PC-3 (cell line): ENCODE measurements at regions of chr10 and their contacts with region 1.

Region 1: GRCh38 chr10:86376852-86377796 is 10.5 kb upstream of the GRID1 start:
- DNase-seq: peak; percentile 69
- ATAC-seq: peak; percentile 99
- H3K4me3 ChIP-seq: peak overlapping the region; percentile 38; the same call in 1 of the 2 replicates
- H3K27ac ChIP-seq: no peak overlapping the region
- H3K4me1 ChIP-seq: no peaks in the 10 kb centered on the region
- H3K27me3 ChIP-seq: peaks cover 8% of the 10 kb centered on the region; the same call in 1 of the 2 replicates
- CTCF ChIP-seq: peak; percentile 84

Region 2: GRCh38 chr10:85995791-85996190 is 381.3 kb before region 1 on chr10:
- CTCF ChIA-PET with region 1: no interaction called
- POLR2A ChIA-PET with region 1: no interaction called
- intact Hi-C with region 1: loop called (anchors 5 kb)
- DNase-seq: peak; percentile 43
- ATAC-seq: peak; percentile 33; the same call in 1 of the 2 replicates
- H3K4me3 ChIP-seq: no peak overlapping the region
- H3K27ac ChIP-seq: no peak overlapping the region
- H3K4me1 ChIP-seq: no peaks in the 10 kb centered on the region
- H3K27me3 ChIP-seq: no peaks in the 10 kb centered on the region
- CTCF ChIP-seq: peak; percentile 45; the same call in 1 of the 2 replicates

Region 3: DNA sequence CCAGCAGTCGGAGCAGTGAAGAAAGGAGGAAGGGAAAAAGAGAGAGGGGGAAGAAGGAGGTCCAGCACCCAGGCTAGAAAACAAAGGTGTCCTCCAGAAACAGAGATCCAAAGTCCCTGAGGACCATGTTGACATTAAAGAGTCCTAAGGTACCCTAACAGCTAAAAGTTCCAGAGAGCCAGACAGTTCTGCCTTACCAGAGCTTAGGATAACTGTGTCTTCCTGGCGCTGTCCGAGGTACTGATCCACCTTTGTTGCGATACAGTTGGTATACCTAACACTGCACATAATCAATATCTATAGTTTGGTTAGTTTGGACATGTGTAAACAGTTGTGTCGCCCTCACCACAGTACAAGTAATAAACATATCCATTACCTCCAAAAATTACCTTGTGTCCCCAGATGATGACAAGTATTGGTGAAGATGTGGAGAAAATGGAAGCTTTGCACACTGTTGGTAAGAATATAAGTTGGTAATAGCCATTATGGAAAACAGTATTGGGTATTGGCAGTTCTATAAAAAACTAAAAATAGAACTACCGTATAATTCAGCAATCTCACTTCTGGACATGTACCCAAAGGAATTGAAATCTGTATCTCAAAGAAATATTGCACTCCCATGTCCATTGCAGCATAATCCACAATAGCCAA is 70.4 kb before region 1 on chr10:
- CTCF ChIA-PET with region 1: no interaction called
- POLR2A ChIA-PET with region 1: no interaction called
- intact Hi-C with region 1: no loop called
- DNase-seq: peak; percentile 24
- ATAC-seq: no peak
- H3K4me3 ChIP-seq: no peak overlapping the region
- H3K27ac ChIP-seq: no peak overlapping the region
- H3K4me1 ChIP-seq: no peaks in the 10 kb centered on the region
- H3K27me3 ChIP-seq: no peaks in the 10 kb centered on the region
- CTCF ChIP-seq: no peak

Region 4: GRCh38 chr10:86349474-86349873 is 27.6 kb before region 1 on chr10:
- CTCF ChIA-PET with region 1: no interaction called
- POLR2A ChIA-PET with region 1: no interaction called
- intact Hi-C with region 1: loop called (anchors 2 kb)
- DNase-seq: no peak
- ATAC-seq: no peak
- H3K4me3 ChIP-seq: no peak overlapping the region
- H3K27ac ChIP-seq: no peak overlapping the region
- H3K4me1 ChIP-seq: peaks cover 4% of the 10 kb centered on the region; the same call in 1 of the 2 replicates
- H3K27me3 ChIP-seq: peaks cover 12% of the 10 kb centered on the region
- CTCF ChIP-seq: 0 out of 2 replicates have a peak, but pooled peaks have one; percentile 30